ENCODE measurements at regions of chr3 and their contacts with region 1.

Region 1: DNA sequence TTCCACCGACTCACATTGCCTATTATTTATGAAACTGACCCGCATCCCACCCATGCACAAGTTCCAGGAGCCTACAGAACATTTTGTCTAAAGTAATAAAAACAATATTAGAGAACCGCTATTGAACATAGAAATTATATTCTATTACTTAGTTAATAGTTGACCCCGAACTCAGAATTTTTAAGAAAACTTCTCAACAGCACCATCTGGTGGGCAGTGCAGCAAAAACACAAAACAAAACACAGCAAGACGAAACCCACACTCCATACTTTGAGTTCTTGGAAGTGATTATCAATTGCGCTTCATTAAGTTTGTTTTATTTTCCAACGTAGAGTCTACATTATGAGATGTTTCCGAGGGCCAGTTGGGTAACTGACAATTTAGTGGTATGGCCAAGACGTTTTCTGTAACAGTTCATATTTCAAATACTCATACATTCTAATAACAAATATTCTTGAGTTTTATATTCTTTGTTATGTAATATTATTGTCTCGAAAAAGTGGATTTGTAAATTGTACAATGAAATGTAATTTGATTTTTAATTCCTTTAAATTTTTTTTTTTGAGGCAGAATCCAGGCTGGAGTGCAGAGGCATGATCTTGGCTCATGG is 24.0 kb upstream of the C3orf70 start:
- DNase-seq: no peak
- ATAC-seq: peak in 2 of 4 donors; percentile 34 to 38
- H3K4me3 ChIP-seq: no peak overlapping the region
- H3K27ac ChIP-seq: no peak overlapping the region
- H3K4me1 ChIP-seq: peaks cover 0 to 20% (median 2%) of the 10 kb centered on the region in 12 donors
- H3K27me3 ChIP-seq: no peaks in the 10 kb centered on the region
- CTCF ChIP-seq: peak; percentile 55 to 82 (median 72)
- POLR2A ChIP-seq: no peak

Region 2: DNA sequence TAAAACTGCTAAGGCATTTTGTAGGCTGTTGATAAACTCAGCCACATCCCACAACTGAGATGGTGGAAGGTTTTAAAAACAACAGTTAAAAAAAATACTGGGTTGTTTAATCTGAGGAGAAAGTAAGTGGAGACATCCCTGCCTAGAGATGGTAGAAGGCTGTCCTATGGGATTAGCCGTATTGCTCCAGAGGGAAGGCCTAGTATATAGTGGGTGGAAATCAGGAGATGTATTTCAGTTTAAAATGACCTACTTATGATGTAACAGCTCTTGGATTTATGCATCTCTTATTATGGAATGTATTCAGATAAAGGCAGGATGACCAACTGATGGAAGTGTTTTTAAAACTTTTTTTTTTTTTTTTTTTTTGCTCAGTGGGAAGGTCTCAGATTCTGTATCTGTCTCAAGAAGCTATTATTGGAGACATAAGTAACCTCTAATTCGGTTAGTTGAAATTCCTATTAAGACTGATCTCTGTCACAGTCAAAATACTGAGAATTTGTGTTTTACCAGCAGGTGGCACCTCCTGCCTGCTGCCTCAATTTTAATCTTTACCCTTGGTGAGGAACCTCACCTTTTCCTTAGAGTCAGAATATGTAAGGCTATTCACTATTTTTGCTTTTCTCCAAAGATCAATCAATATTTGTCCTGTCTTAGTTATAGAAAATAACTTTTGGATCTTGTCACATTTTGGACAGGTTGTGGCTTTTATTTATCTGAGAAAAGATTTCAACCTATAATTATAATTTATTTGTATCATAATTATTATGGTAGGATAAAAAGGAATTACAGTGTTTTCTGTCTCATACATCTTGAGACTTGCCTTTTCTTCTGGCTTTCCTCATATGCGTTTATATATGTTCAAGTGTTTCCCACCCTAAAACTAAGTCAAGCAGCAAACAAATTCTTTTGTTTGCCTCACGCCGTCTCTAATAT is 301.9 kb before region 1 on chr3:
- intact Hi-C with region 1: loop called (anchors 1 to 10 kb)
- DNase-seq: no peak
- ATAC-seq: no peak
- H3K4me3 ChIP-seq: no peak overlapping the region
- H3K27ac ChIP-seq: no peak overlapping the region
- H3K4me1 ChIP-seq: no peaks in the 10 kb centered on the region
- H3K27me3 ChIP-seq: no peaks in the 10 kb centered on the region
- CTCF ChIP-seq: peak; percentile 43 to 78 (median 59)
- POLR2A ChIP-seq: no peak

Region 3: GRCh38 chr3:184952671-184953070 is 224.2 kb before region 1 on chr3:
- intact Hi-C with region 1: loop called in 1 of 10 experiments (anchors 10 kb)
- DNase-seq: no peak
- ATAC-seq: no peak
- H3K4me3 ChIP-seq: no peak overlapping the region
- H3K27ac ChIP-seq: no peak overlapping the region
- H3K4me1 ChIP-seq: peaks cover 0 to 18% (median 6%) of the 10 kb centered on the region in 12 donors
- H3K27me3 ChIP-seq: no peaks in the 10 kb centered on the region
- CTCF ChIP-seq: no peak
- POLR2A ChIP-seq: no peak

Region 4: GRCh38 chr3:184965639-184966430 is 211.0 kb before region 1 on chr3:
- intact Hi-C with region 1: loop called in 1 of 10 experiments (anchors 10 kb)
- DNase-seq: no peak
- ATAC-seq: no peak
- H3K4me3 ChIP-seq: no peak overlapping the region
- H3K27ac ChIP-seq: no peak overlapping the region
- H3K4me1 ChIP-seq: no peaks in the 10 kb centered on the region
- H3K27me3 ChIP-seq: no peaks in the 10 kb centered on the region
- CTCF ChIP-seq: peak in 1 of 12 donors; percentile 4
- POLR2A ChIP-seq: no peak

Region 5: DNA sequence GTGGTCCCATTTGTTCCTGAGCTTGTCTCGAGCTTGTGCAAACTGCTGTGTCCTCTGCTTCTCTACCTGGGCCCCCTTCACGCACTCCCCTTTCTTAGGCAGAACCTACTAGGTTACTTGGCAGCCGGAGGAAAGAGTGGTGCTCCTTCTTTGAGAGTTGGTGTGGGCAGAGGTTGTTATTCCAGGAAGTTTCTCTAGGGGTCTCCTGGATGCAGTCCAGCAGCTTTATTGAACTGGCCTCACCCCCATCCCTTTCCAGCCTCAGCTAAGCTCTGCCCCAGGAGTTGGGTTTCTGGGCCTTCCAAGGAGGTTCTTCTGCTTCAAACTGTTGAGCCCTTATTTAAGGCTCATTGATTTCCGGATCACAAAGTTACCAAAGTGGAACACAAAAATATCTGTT is 127.1 kb before region 1 on chr3:
- intact Hi-C with region 1: loop called in 1 of 10 experiments (anchors 10 kb)
- DNase-seq: no peak
- ATAC-seq: no peak
- H3K4me3 ChIP-seq: no peak overlapping the region
- H3K27ac ChIP-seq: no peak overlapping the region
- H3K4me1 ChIP-seq: peaks cover 0 to 23% (median 19%) of the 10 kb centered on the region in 12 donors
- H3K27me3 ChIP-seq: no peaks in the 10 kb centered on the region
- CTCF ChIP-seq: no peak
- POLR2A ChIP-seq: no peak

Region 6: DNA sequence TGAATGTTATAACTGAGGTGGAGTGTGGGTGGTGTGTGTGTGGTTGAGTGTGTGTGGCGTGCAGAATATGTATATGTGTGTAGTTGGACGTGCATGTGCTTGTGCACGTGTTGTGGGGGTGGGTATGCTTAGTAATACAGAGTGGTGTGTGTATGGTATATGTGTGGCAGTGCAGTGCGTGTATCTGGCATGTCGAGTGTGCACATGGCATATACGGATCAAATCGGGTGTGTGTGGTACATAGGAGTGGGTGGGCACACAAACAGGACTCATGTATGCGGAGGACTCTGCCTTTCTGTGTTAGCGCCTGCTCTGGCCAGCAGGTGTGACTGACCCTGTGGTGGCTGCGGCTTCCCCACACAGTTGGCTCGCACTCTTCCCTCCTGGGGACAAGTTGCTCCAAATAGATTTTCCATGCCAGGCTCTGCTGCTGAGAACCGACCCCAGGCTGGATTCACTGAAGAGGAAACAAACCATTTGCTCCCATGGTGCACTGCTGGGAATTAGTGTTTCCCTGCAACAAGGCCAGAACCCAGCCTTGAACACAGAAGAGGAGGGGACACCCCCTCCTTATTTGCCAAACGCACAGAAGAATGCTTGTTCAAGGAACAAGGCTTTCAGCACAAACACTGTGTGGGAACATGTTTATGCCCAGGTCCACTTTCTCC is 22.8 kb before region 1 on chr3:
- intact Hi-C with region 1: loop called in 1 of 10 experiments (anchors 2 kb)
- DNase-seq: no peak
- ATAC-seq: peak in 1 of 4 donors; percentile 27
- H3K4me3 ChIP-seq: peak overlapping the region in 3 of 12 donors; percentile 75 to 82 (median 81)
- H3K27ac ChIP-seq: peak overlapping the region in 1 of 12 donors; percentile 41
- H3K4me1 ChIP-seq: peaks cover 0 to 27% (median 0%) of the 10 kb centered on the region in 12 donors
- H3K27me3 ChIP-seq: peaks cover 0 to 39% (median 7%) of the 10 kb centered on the region in 9 donors
- CTCF ChIP-seq: no peak
- POLR2A ChIP-seq: no peak